Activated CD4-positive, alpha-beta memory T cell treated with anti-CD3 and anti-CD28 coated beads for 36 hours (primary cell): ENCODE measurements at regions of chr1 and their contacts with region 1.

Region 1: DNA sequence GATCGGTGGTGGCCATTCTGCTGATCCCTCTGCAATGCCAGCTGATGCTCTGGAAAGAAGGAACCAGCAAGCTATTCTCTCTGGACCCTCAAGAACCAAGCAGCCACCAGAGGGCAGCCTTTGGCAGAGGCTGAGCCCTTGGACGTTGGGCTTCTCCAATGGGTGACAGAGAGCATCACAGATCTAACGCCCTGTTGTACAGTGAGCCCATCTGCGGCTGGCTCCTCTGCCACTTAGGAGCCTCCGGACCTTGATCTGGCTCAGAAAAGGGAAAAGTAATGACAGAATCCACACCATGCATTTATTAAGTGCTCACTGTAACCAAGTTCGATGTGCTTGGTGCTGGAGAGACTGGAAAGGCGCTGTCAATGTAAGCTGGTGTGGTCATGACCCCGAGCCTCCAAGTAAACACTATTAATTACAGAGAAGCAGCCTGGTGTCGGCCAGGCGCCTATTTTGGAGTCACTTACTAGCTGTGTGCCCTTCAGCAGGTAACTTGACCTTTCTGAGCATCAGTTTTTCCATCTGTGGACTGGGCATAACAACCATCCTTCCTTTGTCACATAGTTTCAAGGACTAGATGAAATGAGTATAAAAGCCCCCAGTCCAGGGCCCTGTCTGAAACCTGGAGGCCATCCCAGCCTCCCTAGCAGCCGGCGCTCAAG is 34.9 kb downstream of the ECE1 start:
- DNase-seq: peak; percentile 88
- H3K4me3 Mint-ChIP-seq: no peak overlapping the region
- H3K27ac Mint-ChIP-seq: peak overlapping the region; percentile 59
- H3K4me1 Mint-ChIP-seq: peaks cover 48% of the 10 kb centered on the region
- H3K27me3 Mint-ChIP-seq: no peaks in the 10 kb centered on the region

Region 2: DNA sequence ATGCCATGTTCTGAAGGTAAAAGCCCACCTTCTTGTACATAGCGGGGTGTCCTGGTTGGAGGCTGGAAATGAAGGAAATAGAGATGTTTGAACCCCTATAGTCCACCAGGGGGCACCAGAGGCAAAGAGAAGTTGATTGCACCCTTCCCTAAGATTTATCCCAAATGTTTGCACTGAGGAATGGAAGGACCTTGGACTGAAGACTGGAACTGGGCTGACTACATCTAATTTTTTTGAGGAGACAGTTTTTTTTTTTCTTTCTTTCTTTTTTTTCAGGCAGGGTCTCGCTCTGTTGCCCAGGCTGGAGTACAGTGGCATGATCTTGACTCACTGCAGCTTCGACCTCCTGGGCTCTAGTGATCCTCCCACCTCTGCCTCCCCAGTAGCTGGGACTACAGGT is 23.4 kb before region 1 on chr1:
- CTCF ChIA-PET with region 1: interaction called, 20 read pairs
- POLR2A ChIA-PET with region 1: no interaction called
- intact Hi-C with region 1: no loop called
- DNase-seq: no peak
- H3K4me3 Mint-ChIP-seq: no peak overlapping the region
- H3K27ac Mint-ChIP-seq: no peak overlapping the region
- H3K4me1 Mint-ChIP-seq: no peaks in the 10 kb centered on the region
- H3K27me3 Mint-ChIP-seq: no peaks in the 10 kb centered on the region

Region 3: DNA sequence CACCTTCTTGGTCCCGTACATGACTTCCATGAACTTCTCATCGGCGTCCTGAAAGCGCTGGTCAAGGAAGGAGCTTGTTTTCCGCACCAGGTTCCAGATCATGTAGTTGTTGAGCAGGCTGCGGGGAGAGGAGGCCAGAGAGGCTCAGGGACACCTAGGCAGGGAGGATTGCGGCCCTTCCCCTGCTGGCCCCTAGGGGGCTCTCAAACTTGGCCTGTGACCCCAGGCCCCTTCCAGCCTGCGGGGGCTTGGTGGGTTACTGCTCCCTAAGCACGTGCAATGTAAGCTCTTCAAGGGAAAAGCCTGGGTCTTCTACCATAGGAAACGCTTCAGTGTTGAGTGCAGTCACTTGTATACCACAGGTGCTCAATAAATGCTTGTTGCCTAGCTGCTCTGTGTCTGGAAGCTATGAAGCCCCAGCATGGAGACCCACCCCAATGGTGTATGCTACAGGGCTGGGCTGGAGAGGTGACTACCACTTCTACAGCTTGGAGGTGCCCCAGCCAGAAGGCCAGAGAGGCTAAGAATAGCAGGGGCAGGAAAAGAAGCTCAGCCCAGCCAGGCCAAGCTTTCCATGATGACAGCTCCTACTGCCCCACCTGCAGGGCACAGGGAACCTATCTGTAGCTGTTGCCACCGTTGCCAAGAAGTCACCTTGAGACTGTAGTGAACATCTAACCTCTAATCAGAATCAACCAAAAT is 10.3 kb before region 1 on chr1:
- CTCF ChIA-PET with region 1: interaction called, 15 read pairs
- POLR2A ChIA-PET with region 1: no interaction called
- intact Hi-C with region 1: no loop called
- DNase-seq: peak; percentile 27
- H3K4me3 Mint-ChIP-seq: no peak overlapping the region
- H3K27ac Mint-ChIP-seq: no peak overlapping the region
- H3K4me1 Mint-ChIP-seq: no peaks in the 10 kb centered on the region
- H3K27me3 Mint-ChIP-seq: no peaks in the 10 kb centered on the region

Region 4: GRCh38 chr1:21324368-21325141 is 69.1 kb after region 1 on chr1:
- CTCF ChIA-PET with region 1: interaction called, 12 read pairs
- POLR2A ChIA-PET with region 1: interaction called, 3 read pairs
- intact Hi-C with region 1: loop called (anchors 1 kb)
- DNase-seq: peak; percentile 90
- H3K4me3 Mint-ChIP-seq: peak overlapping the region; percentile 45
- H3K27ac Mint-ChIP-seq: peak overlapping the region; percentile 90
- H3K4me1 Mint-ChIP-seq: peaks cover 81% of the 10 kb centered on the region
- H3K27me3 Mint-ChIP-seq: no peaks in the 10 kb centered on the region

Region 5: DNA sequence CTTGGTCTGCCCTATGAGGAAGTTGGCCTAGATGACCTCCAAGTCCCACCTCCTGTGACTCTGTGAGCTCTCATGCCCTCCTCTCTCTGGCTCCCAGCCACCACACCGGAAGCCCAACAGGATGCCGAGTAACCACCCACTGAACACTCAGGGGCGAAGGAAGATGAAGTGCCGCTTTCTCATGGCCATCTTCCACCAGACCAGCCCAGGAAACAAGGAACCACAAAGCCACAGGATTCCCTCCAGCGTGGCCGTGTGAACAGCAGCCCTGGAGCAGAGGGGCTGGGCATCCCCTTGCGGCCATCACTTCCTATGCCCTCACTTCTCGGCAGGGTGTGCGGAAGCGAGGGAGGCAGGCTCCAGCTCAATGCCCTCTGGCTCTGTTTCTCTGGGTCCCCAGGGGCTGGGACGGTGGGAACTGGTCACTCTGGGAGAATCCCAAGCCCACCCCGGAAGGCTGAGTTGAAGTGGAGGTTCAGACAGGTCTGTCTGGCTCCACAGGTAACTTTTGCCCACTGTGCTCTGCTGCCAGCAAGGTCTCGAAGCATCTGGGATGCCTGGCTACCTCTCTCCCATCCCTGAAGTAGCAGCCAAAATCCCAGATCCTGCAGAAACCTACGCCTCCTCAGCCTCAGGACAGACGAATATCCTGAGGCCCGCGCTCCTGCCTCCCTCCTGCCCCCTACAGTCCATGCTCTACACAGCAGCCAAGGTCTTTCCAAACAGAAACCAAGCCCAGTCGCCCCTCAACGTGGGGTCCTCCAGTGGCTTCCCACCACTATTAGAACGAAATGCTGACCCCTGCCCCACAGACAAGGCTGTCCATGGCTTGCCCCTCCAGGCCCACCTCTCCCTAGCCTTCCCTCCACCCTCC is 79.0 kb after region 1 on chr1:
- CTCF ChIA-PET with region 1: interaction called, 21 read pairs
- POLR2A ChIA-PET with region 1: interaction called, 3 read pairs
- intact Hi-C with region 1: loop called (anchors 2 kb)
- DNase-seq: peak; percentile 89
- H3K4me3 Mint-ChIP-seq: peak overlapping the region; percentile 83
- H3K27ac Mint-ChIP-seq: peak overlapping the region; percentile 98
- H3K4me1 Mint-ChIP-seq: peaks cover 88% of the 10 kb centered on the region
- H3K27me3 Mint-ChIP-seq: no peaks in the 10 kb centered on the region

Region 6: GRCh38 chr1:21344750-21345443 is 89.5 kb after region 1 on chr1:
- CTCF ChIA-PET with region 1: interaction called, 16 read pairs
- POLR2A ChIA-PET with region 1: interaction called, 5 read pairs
- intact Hi-C with region 1: loop called (anchors 1 kb)
- DNase-seq: peak; percentile 45
- H3K4me3 Mint-ChIP-seq: peak overlapping the region; percentile 91
- H3K27ac Mint-ChIP-seq: peak overlapping the region; percentile 94
- H3K4me1 Mint-ChIP-seq: peaks cover 40% of the 10 kb centered on the region
- H3K27me3 Mint-ChIP-seq: no peaks in the 10 kb centered on the region

Region 7: DNA sequence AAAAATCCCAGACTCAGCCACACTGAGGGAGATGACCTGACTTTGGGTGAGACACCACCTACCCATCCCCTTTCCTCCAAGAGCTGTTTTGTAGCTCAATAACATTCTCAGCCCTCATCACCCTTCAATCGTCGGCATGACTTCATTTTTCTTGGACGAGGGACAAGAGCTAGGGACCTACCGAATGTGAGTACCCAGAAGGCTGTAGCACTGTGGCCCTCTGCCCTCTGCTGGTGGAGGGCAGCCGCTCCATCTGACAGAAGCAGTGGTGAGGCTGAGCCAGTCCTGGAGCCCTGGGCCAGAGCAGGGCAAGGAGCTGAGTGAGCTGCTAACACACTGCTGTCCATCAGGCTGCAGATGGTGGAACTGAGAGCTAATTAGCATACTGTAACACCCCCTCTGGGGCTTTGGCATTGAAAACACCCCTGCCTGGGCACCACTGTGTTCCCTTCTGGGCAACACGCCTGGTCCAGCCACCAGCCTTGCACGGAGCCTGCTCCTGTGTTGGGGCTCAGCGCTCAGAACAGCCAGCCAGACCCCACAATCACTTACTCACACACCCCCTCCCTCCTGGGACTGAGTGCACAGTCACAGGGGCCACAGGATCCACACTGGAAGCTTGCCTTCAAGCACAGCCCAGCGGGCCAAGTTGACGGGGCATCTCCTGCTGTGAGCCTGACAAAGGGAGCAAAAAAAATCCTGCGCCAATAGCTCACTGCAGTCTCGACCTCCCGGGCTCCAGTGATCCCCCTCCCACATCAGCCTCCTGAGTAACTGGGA is 235.6 kb after region 1 on chr1:
- CTCF ChIA-PET with region 1: interaction called, 10 read pairs
- POLR2A ChIA-PET with region 1: no interaction called
- intact Hi-C with region 1: no loop called
- DNase-seq: peak; percentile 59
- H3K4me3 Mint-ChIP-seq: no peak overlapping the region
- H3K27ac Mint-ChIP-seq: no peak overlapping the region
- H3K4me1 Mint-ChIP-seq: peaks cover 8% of the 10 kb centered on the region
- H3K27me3 Mint-ChIP-seq: peaks cover 8% of the 10 kb centered on the region